ENCODE measurements at regions of chr11 and their contacts with region 1.

Region 1: DNA sequence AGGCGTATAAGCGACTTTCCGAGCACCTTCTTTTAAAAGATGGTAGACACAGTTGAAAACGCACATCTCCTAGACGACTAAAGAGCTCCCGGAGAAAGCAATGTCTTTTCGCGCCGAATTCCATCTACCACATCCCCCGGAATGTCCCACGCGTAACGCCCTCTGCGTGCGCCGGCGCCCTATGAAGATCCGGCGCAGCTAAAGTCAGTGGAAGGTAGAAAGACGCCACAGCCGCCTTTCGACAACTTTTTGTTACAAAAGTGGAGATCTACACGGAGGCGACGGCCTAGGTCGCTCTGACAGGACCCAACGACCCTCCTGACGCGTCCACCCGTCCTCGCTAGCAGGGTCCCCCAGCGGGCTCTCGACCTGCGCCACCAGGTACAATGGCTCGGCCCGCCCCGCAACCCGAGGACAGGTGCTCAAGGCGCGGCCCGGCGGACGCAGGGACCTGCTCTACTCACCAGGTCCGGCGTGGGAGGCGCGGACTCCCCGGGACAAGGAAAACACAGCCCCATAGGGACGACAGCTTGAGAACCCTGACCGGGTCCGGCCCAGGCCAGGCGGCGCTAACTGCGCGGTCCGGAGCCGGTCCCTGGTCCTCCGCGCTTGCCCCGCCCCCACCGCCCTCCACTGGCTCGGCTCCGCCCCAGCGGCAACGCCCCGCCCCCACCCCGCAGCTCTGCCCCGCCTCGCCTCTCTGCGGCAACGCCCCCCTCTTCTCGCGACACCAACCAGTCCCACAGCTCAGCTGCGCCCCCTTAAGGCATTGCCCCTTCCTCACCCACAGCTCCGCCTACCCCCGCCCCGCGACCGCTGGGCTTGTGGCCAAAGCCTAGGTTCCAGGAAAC is at the start of gene SVIP:
- DNase-seq: peak; percentile 86 to 96
- ATAC-seq: peak; percentile 94 to 99 (median 95)
- H3K4me3 ChIP-seq: peak within 1 kb of the TSS; percentile 98
- H3K4me3 Mint-ChIP-seq: peak within 1 kb of the TSS; percentile 91
- H3K27ac ChIP-seq: peak within 1 kb of the TSS; percentile 86
- H3K27ac Mint-ChIP-seq: peak within 1 kb of the TSS; percentile 79 to 87
- H3K4me1 ChIP-seq: peaks cover 3% of the 10 kb centered on the region
- H3K4me1 Mint-ChIP-seq: peaks cover 15 to 19% of the 10 kb centered on the region in 2 donors
- H3K27me3 ChIP-seq: no peaks in the 10 kb centered on the region
- H3K27me3 Mint-ChIP-seq: no peaks in the 10 kb centered on the region
- CTCF ChIP-seq: no peak
- total RNA-seq, gene SVIP: 14.9 to 19.2 (median 17.5) TPM

Region 2: GRCh38 chr11:22625448-22626287 is 203.8 kb before region 1 on chr11 and contains the start of gene FANCF:
- intact Hi-C with region 1: loop called (anchors 2 kb)
- DNase-seq: peak; percentile 86 to 100
- ATAC-seq: peak; percentile 92 to 97 (median 94)
- H3K4me3 ChIP-seq: peak within 1 kb of the TSS; percentile 75
- H3K4me3 Mint-ChIP-seq: peak within 1 kb of the TSS; percentile 98
- H3K27ac ChIP-seq: peak within 1 kb of the TSS; percentile 92
- H3K27ac Mint-ChIP-seq: peak within 1 kb of the TSS; percentile 96 to 97
- H3K4me1 ChIP-seq: peaks cover 11% of the 10 kb centered on the region
- H3K4me1 Mint-ChIP-seq: peaks cover 31 to 34% of the 10 kb centered on the region in 2 donors
- H3K27me3 ChIP-seq: no peaks in the 10 kb centered on the region
- H3K27me3 Mint-ChIP-seq: no peaks in the 10 kb centered on the region
- CTCF ChIP-seq: no peak
- total RNA-seq, gene FANCF: 7.2 to 10.3 (median 9.7) TPM